ENCODE measurements at regions of chr2 and their contacts with region 1.

Region 1: DNA sequence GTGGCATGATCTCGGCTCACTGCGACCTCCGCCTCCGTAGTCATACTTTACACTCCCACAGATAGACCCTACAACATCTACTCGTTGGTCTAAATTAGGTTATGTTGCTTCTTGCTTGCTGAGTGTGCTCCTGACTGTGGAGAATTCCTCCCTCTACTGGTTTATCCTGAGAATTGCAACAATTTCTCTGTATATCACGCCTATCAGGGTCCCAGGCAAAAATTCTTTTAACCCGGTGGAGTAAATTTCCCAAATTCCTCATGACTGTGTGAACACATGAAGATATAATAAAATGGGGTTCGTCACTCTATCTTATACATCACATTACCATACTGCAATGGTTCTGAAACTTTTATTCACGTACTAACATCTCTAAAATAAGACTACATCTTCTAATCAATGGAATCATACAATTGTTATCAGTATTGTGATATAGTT is 156.7 kb downstream of the EVA1A start:
- DNase-seq: no peak
- H3K4me3 ChIP-seq: no peak overlapping the region
- H3K27ac ChIP-seq: no peak overlapping the region
- H3K4me1 ChIP-seq: no peaks in the 10 kb centered on the region
- H3K27me3 ChIP-seq: peaks cover 9% of the 10 kb centered on the region
- CTCF ChIP-seq: peak; percentile 59 to 77 (median 67)
- EP300 ChIP-seq: no peak
- POLR2A ChIP-seq: no peak

Region 2: DNA sequence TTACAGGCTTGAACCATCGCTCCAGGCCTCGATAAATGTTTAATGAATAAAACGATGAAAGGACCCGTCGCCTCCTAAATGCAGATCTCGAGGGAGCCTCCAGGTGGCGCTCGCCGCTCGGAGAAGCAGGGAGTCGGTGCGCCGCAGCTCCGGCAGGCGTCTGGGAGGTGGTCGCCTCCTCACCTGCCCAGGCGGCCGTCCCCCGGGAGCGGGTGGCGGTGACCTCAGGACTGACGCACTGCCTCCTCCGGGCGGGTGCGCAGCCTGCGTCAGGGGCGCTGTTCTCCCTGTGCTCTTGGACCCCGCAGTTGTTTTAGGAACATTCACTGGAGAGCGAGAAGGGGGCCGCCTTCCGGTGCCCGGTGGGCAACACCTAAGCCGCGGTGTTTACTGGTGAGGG is 484.2 kb before region 1 on chr2:
- in situ Hi-C with region 1: loop called (anchors 10 to 25 kb)
- intact Hi-C with region 1: loop called (anchors 5 kb)
- DNase-seq: peak; percentile 73
- H3K4me3 ChIP-seq: peak overlapping the region in 3 of 4 donors; percentile 22 to 38 (median 27)
- H3K27ac ChIP-seq: no peak overlapping the region
- H3K4me1 ChIP-seq: peaks cover 0 to 8% (median 2%) of the 10 kb centered on the region in 4 donors
- H3K27me3 ChIP-seq: peaks cover 9% of the 10 kb centered on the region
- CTCF ChIP-seq: peak; percentile 80 to 91 (median 87)
- EP300 ChIP-seq: no peak
- POLR2A ChIP-seq: no peak

Region 3: GRCh38 chr2:75064691-75065396 is 339.2 kb before region 1 on chr2:
- in situ Hi-C with region 1: loop called in 1 of 4 experiments (anchors 25 kb)
- intact Hi-C with region 1: no loop called
- DNase-seq: peak; percentile 55
- H3K4me3 ChIP-seq: no peak overlapping the region
- H3K27ac ChIP-seq: no peak overlapping the region
- H3K4me1 ChIP-seq: no peaks in the 10 kb centered on the region
- H3K27me3 ChIP-seq: no peaks in the 10 kb centered on the region
- CTCF ChIP-seq: peak; percentile 58 to 84 (median 70)
- EP300 ChIP-seq: no peak
- POLR2A ChIP-seq: no peak

Region 4: DNA sequence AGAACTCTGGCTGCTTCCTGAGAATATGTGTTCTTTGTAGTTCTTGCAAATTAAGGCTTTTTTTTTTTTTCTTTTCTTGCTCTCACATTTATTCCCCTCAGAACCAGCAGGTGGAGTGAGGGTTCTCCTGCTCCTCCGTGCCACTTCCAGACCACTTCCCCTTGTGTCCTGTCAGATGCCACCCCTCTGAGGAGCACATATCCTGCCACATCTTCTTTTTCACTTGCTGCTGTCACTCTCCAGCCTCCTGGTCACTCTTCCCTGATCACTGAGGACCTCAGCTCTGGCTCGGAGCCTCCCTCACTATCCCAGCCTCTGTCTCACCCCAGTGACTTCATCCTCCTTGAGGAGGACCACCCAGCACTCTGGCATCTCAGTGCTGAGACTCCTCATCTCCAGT is 305.2 kb before region 1 on chr2:
- in situ Hi-C with region 1: loop called in 1 of 4 experiments (anchors 25 kb)
- intact Hi-C with region 1: no loop called
- DNase-seq: no peak
- H3K4me3 ChIP-seq: no peak overlapping the region
- H3K27ac ChIP-seq: no peak overlapping the region
- H3K4me1 ChIP-seq: no peaks in the 10 kb centered on the region
- H3K27me3 ChIP-seq: no peaks in the 10 kb centered on the region
- CTCF ChIP-seq: peak in 4 of 5 experiments; percentile 20 to 30 (median 26)
- EP300 ChIP-seq: no peak
- POLR2A ChIP-seq: no peak